Activated CD4-positive, alpha-beta memory T cell treated with anti-CD3 and anti-CD28 coated beads for 36 hours (primary cell): ENCODE measurements at regions of chr11 and their contacts with region 1.

Region 1: GRCh38 chr11:122796128-122796717 is 42.1 kb upstream of the CRTAM start:
- DNase-seq: peak; percentile 76
- H3K4me3 Mint-ChIP-seq: no peak overlapping the region
- H3K27ac Mint-ChIP-seq: no peak overlapping the region
- H3K4me1 Mint-ChIP-seq: no peaks in the 10 kb centered on the region
- H3K27me3 Mint-ChIP-seq: no peaks in the 10 kb centered on the region

Region 2: GRCh38 chr11:122578168-122578825 is 217.9 kb before region 1 on chr11:
- CTCF ChIA-PET with region 1: interaction called, 4 read pairs
- POLR2A ChIA-PET with region 1: no interaction called
- intact Hi-C with region 1: loop called (anchors 1 kb)
- DNase-seq: no peak
- H3K4me3 Mint-ChIP-seq: no peak overlapping the region
- H3K27ac Mint-ChIP-seq: no peak overlapping the region
- H3K4me1 Mint-ChIP-seq: peaks cover 8% of the 10 kb centered on the region
- H3K27me3 Mint-ChIP-seq: peaks cover 2% of the 10 kb centered on the region

Region 3: DNA sequence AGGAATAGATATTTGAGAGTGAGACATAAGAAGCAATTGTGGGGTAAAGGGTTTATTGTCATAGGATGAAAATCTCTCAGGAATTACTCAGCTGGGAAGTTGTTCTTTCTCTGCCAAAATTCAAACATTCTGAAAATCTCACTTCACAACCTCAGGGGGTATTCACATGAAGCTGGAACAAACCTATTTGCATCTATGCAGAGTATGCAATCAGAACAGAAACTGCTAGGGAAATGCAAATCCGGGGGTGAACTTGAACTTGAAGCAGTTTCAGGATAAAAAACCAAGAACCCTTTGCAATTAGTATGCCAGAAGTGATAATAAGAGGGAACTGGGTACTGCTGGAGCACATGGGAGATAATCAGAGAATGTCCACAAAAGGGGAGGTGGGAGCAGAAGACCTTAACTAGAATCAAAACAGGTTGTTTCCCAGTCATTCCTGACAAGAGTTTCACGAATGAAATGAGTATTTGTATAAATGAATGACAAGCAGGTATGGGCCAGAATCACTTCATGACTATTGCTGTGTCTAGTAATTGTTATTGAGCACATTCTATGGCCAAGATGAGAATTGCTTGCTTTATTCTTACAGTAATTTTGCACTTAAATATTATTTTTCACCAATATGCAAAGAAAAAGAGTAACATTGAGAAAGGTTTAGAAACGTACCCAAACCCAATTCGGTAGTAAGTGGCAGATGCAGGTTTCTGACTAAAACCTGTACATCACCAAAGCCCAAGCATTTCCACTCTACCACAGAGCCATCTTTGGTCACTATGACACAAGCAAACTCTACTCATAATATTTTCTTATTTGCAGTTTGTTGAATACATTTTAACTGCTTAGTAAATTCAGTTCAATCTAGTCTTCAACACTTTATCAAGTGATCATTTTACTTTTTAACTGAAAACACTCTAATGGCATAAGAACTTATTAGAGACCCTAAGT is 202.5 kb before region 1 on chr11:
- CTCF ChIA-PET with region 1: no interaction called
- POLR2A ChIA-PET with region 1: no interaction called
- intact Hi-C with region 1: no loop called
- DNase-seq: no peak
- H3K4me3 Mint-ChIP-seq: no peak overlapping the region
- H3K27ac Mint-ChIP-seq: no peak overlapping the region
- H3K4me1 Mint-ChIP-seq: peaks cover 8% of the 10 kb centered on the region
- H3K27me3 Mint-ChIP-seq: peaks cover 27% of the 10 kb centered on the region

Region 4: GRCh38 chr11:122772945-122773344 is 23.3 kb before region 1 on chr11:
- CTCF ChIA-PET with region 1: interaction called, 20 read pairs
- POLR2A ChIA-PET with region 1: no interaction called
- intact Hi-C with region 1: no loop called
- DNase-seq: no peak
- H3K4me3 Mint-ChIP-seq: no peak overlapping the region
- H3K27ac Mint-ChIP-seq: no peak overlapping the region
- H3K4me1 Mint-ChIP-seq: peaks cover 34% of the 10 kb centered on the region
- H3K27me3 Mint-ChIP-seq: peaks cover 2% of the 10 kb centered on the region

Region 5: GRCh38 chr11:122808478-122808869 is 12.3 kb after region 1 on chr11:
- CTCF ChIA-PET with region 1: interaction called, 35 read pairs
- POLR2A ChIA-PET with region 1: no interaction called
- intact Hi-C with region 1: no loop called
- DNase-seq: peak; percentile 41
- H3K4me3 Mint-ChIP-seq: no peak overlapping the region
- H3K27ac Mint-ChIP-seq: peak overlapping the region; percentile 0
- H3K4me1 Mint-ChIP-seq: peaks cover 27% of the 10 kb centered on the region
- H3K27me3 Mint-ChIP-seq: no peaks in the 10 kb centered on the region

Region 6: GRCh38 chr11:122981388-122982264 is 185.4 kb after region 1 on chr11 and contains the start of gene BSX:
- CTCF ChIA-PET with region 1: no interaction called
- POLR2A ChIA-PET with region 1: no interaction called
- intact Hi-C with region 1: no loop called
- DNase-seq: peak; percentile 70
- H3K4me3 Mint-ChIP-seq: no peak within 1 kb of the TSS
- H3K27ac Mint-ChIP-seq: no peak within 1 kb of the TSS
- H3K4me1 Mint-ChIP-seq: peaks cover 36% of the 10 kb centered on the region
- H3K27me3 Mint-ChIP-seq: peaks cover 84% of the 10 kb centered on the region
- total RNA-seq, gene BSX: not detected